Endothelial cell of umbilical vein (primary cell): ENCODE measurements at regions of chr9 and their contacts with region 1.

Region 1: DNA sequence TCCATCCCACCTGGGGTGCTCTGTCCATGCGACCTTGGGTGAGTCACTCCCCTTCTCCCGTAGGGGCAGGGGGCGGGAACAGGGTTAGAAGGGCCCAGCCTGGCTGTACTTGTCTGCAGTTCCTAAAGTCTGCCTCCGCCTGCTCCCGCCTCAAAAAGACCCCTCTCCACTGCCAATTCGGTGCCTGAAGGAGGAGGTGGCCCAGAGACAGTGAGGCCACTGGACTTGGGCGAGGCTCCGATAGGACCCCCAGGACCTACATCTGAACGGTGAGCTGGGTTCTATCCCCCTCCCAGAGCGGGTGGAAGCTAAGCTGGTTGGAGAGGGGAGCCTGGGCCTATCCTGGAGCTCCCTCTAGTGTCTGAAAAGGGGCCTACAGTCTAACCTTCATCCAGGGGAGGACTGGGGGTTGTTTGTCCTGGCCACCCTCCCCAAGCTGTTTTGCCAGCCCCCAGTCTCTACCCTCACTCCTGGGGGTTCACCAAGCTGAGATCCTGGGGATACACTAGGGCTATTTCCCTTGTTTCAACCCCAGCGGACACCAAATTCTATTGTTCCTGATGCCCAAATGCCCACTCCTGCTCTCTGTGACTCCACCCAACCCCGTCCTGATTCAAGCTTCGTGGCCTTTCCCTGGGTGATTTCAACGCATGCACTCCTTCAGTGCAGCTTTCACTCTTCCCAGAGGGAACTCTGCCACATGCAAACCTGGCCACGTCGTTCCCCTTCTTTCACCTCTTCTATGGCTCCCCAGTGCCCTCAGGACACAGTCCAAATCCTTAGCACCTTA is 6.1 kb upstream of the CRB2 start:
- DNase-seq: peak; percentile 63
- H3K4me3 ChIP-seq: no peak overlapping the region
- H3K27ac ChIP-seq: no peak overlapping the region
- H3K4me1 ChIP-seq: no peaks in the 10 kb centered on the region
- H3K27me3 ChIP-seq: peaks cover 0 to 2% of the 10 kb centered on the region in 2 experiments
- CTCF ChIP-seq: peak; percentile 84 to 95
- POLR2A ChIP-seq: no peak

Region 2: GRCh38 chr9:122464633-122465567 is 885.0 kb before region 1 on chr9:
- CTCF ChIA-PET with region 1: interaction called, 17 read pairs
- POLR2A ChIA-PET with region 1: no interaction called
- dilution Hi-C with region 1: no loop called
- intact Hi-C with region 1: no loop called
- DNase-seq: peak; percentile 96
- H3K4me3 ChIP-seq: peak overlapping the region; percentile 24 to 96 (median 89)
- H3K27ac ChIP-seq: peak overlapping the region; percentile 26
- H3K4me1 ChIP-seq: peaks cover 7% of the 10 kb centered on the region
- H3K27me3 ChIP-seq: peaks cover 6 to 38% of the 10 kb centered on the region in 2 experiments
- CTCF ChIP-seq: peak; percentile 73 to 92
- POLR2A ChIP-seq: no peak

Region 3: GRCh38 chr9:122991370-122991830 is 358.5 kb before region 1 on chr9:
- CTCF ChIA-PET with region 1: interaction called, 10 read pairs
- POLR2A ChIA-PET with region 1: no interaction called
- dilution Hi-C with region 1: no loop called
- intact Hi-C with region 1: loop called (anchors 5 kb)
- DNase-seq: peak; percentile 92
- H3K4me3 ChIP-seq: no peak overlapping the region
- H3K27ac ChIP-seq: no peak overlapping the region
- H3K4me1 ChIP-seq: peaks cover 2% of the 10 kb centered on the region
- H3K27me3 ChIP-seq: no peaks in the 10 kb centered on the region
- CTCF ChIP-seq: peak; percentile 39 to 46
- POLR2A ChIP-seq: no peak

Region 4: GRCh38 chr9:123091459-123091858 is 258.4 kb before region 1 on chr9:
- CTCF ChIA-PET with region 1: interaction called, 24 read pairs
- POLR2A ChIA-PET with region 1: no interaction called
- dilution Hi-C with region 1: no loop called
- intact Hi-C with region 1: no loop called
- DNase-seq: no peak
- H3K4me3 ChIP-seq: no peak overlapping the region
- H3K27ac ChIP-seq: no peak overlapping the region
- H3K4me1 ChIP-seq: no peaks in the 10 kb centered on the region
- H3K27me3 ChIP-seq: no peaks in the 10 kb centered on the region
- CTCF ChIP-seq: peak in 1 of 2 donors; percentile 24
- POLR2A ChIP-seq: no peak

Region 5: GRCh38 chr9:123225374-123225813 is 124.5 kb before region 1 on chr9:
- CTCF ChIA-PET with region 1: interaction called, 29 read pairs
- POLR2A ChIA-PET with region 1: no interaction called
- dilution Hi-C with region 1: no loop called
- intact Hi-C with region 1: loop called (anchors 5 kb)
- DNase-seq: peak; percentile 85
- H3K4me3 ChIP-seq: no peak overlapping the region
- H3K27ac ChIP-seq: no peak overlapping the region
- H3K4me1 ChIP-seq: peaks cover 2% of the 10 kb centered on the region
- H3K27me3 ChIP-seq: no peaks in the 10 kb centered on the region
- CTCF ChIP-seq: peak; percentile 60 to 73
- POLR2A ChIP-seq: no peak

Region 6: GRCh38 chr9:123316053-123316718 is 33.7 kb before region 1 on chr9:
- CTCF ChIA-PET with region 1: no interaction called
- POLR2A ChIA-PET with region 1: no interaction called
- dilution Hi-C with region 1: no loop called
- intact Hi-C with region 1: no loop called
- DNase-seq: no peak
- H3K4me3 ChIP-seq: no peak overlapping the region
- H3K27ac ChIP-seq: no peak overlapping the region
- H3K4me1 ChIP-seq: no peaks in the 10 kb centered on the region
- H3K27me3 ChIP-seq: peaks cover 0 to 2% of the 10 kb centered on the region in 2 experiments
- CTCF ChIP-seq: no peak
- POLR2A ChIP-seq: no peak

Region 7: GRCh38 chr9:123338710-123339665 is 10.9 kb before region 1 on chr9:
- CTCF ChIA-PET with region 1: interaction called, 13 read pairs
- POLR2A ChIA-PET with region 1: interaction called, 3 read pairs
- dilution Hi-C with region 1: no loop called
- intact Hi-C with region 1: no loop called
- DNase-seq: peak; percentile 20
- H3K4me3 ChIP-seq: no peak overlapping the region
- H3K27ac ChIP-seq: no peak overlapping the region
- H3K4me1 ChIP-seq: no peaks in the 10 kb centered on the region
- H3K27me3 ChIP-seq: no peaks in the 10 kb centered on the region
- CTCF ChIP-seq: no peak
- POLR2A ChIP-seq: no peak

Region 8: DNA sequence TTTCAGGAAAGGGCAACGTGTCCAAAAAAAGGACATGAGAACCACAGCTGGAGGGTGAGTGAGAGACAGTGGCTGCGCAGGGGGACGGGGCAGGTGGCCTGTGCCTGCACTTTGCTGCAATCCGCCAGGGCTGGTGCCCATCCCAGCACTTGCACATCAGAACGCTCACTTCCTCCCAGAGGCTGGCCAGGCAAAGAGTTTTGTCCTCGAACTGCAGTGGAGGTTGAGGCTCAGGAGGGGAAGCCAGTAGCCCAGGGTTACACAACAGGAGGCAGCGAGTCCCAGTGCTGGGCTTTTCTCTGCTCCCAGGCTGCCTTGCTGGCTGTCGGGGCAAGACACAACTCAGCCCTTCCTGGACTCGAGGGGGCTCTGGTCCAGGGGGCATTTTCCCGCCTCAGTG is 39.2 kb after region 1 on chr9:
- CTCF ChIA-PET with region 1: interaction called, 117 read pairs
- POLR2A ChIA-PET with region 1: no interaction called
- dilution Hi-C with region 1: no loop called
- intact Hi-C with region 1: loop called (anchors 1 kb)
- DNase-seq: no peak
- H3K4me3 ChIP-seq: no peak overlapping the region
- H3K27ac ChIP-seq: no peak overlapping the region
- H3K4me1 ChIP-seq: no peaks in the 10 kb centered on the region
- H3K27me3 ChIP-seq: no peaks in the 10 kb centered on the region
- CTCF ChIP-seq: no peak
- POLR2A ChIP-seq: no peak

Region 9: GRCh38 chr9:123523001-123523400 is 173.1 kb after region 1 on chr9:
- CTCF ChIA-PET with region 1: no interaction called
- POLR2A ChIA-PET with region 1: no interaction called
- dilution Hi-C with region 1: no loop called
- intact Hi-C with region 1: no loop called
- DNase-seq: no peak
- H3K4me3 ChIP-seq: no peak overlapping the region
- H3K27ac ChIP-seq: no peak overlapping the region
- H3K4me1 ChIP-seq: no peaks in the 10 kb centered on the region
- H3K27me3 ChIP-seq: no peaks in the 10 kb centered on the region
- CTCF ChIP-seq: no peak
- POLR2A ChIP-seq: no peak